CD8-positive, alpha-beta T cell (primary cell): ENCODE measurements at regions of chr12 and their contacts with region 1.

Region 1: GRCh38 chr12:120649442-120650232 is 9.2 kb downstream of the CABP1 start:
- DNase-seq: no peak
- ATAC-seq: no peak
- H3K4me3 ChIP-seq: no peak overlapping the region
- H3K4me3 Mint-ChIP-seq: no peak overlapping the region
- H3K27ac ChIP-seq: no peak overlapping the region
- H3K27ac Mint-ChIP-seq: no peak overlapping the region
- H3K4me1 ChIP-seq: peaks cover 7% of the 10 kb centered on the region
- H3K4me1 Mint-ChIP-seq: peaks cover 9% of the 10 kb centered on the region
- H3K27me3 ChIP-seq: peaks cover 14 to 21% of the 10 kb centered on the region in 2 experiments
- H3K27me3 Mint-ChIP-seq: peaks cover 47% of the 10 kb centered on the region
- CTCF ChIP-seq: peak; percentile 23

Region 2: DNA sequence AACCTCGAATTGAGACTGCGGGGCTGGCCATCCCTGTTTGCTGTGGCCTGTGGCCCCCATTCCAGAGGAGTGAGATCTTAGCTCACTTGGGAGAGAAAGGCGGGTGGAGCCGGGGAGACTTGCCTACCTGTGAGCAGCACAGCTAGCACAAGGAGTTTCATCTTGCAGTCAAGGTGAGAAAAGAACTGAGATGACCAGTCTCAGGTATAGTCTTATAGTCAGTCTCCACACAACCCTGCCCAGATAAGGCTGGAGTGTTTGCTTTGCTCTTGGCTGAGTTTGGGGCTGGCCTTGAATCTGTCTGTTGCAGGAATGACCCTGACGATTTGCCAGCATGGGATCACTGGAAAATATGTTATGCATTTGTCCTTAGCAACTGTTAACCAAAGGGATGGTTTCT is 322.0 kb before region 1 on chr12 and contains the start of gene PLA2G1B:
- CTCF ChIA-PET with region 1: interaction called, 8 read pairs
- POLR2A ChIA-PET with region 1: no interaction called
- intact Hi-C with region 1: loop called (anchors 5 kb)
- DNase-seq: no peak
- ATAC-seq: no peak
- H3K4me3 ChIP-seq: no peak within 1 kb of the TSS
- H3K4me3 Mint-ChIP-seq: no peak within 1 kb of the TSS
- H3K27ac ChIP-seq: no peak within 1 kb of the TSS
- H3K27ac Mint-ChIP-seq: no peak within 1 kb of the TSS
- H3K4me1 ChIP-seq: no peaks in the 10 kb centered on the region
- H3K4me1 Mint-ChIP-seq: peaks cover 7% of the 10 kb centered on the region
- H3K27me3 ChIP-seq: no peaks in the 10 kb centered on the region
- H3K27me3 Mint-ChIP-seq: peaks cover 3% of the 10 kb centered on the region
- CTCF ChIP-seq: no peak
- total RNA-seq, gene PLA2G1B: not detected

Region 3: DNA sequence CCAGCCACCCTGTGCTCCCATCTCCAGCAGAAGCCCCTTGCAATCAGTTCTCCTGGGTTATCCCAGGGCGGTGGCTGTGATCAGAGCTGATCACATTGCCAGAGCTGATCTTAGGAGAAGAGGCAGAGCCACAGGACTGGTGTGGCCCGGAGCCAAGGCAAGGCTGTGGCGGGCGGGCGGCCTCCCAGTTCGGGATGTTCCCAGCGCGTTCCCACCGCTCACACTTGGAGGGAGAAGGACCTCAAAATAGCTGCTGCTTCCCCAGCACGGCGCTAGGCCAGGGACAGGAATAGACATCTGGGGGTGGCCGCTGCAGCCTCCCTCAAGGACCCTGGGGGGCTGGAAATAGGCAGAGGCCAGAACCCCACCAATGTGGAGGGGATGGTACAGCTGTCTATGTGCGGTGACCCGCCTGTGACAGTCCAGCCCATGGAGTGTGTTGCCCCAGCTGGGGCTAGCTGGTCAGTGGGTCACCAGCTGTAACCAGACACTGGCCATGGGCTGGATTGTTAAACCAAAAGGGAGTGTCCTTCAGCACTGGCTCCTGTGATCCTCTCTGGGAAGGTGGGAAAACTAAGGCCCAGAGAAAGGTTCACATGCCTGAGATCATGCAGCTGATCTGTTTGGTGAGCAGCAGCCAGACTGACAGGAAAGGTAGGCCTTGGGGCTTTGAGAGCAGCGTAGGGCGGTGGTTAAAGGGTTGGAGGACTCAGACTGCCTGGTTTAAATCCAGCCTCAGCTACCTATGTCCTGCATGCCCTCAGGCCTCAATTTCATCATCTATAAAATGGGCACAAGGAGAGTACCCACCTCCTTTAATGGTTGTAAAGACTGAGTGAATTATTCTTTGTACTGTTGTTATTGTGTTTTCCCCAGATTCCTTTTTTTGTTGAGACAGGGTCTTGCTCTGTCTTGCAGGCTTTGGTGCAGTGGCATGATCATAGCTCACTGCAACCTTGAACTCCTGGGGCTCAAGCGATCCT is 60.4 kb before region 1 on chr12:
- CTCF ChIA-PET with region 1: interaction called, 101 read pairs
- POLR2A ChIA-PET with region 1: no interaction called
- intact Hi-C with region 1: no loop called
- DNase-seq: no peak
- ATAC-seq: no peak
- H3K4me3 ChIP-seq: no peak overlapping the region
- H3K4me3 Mint-ChIP-seq: no peak overlapping the region
- H3K27ac ChIP-seq: no peak overlapping the region
- H3K27ac Mint-ChIP-seq: no peak overlapping the region
- H3K4me1 ChIP-seq: no peaks in the 10 kb centered on the region
- H3K4me1 Mint-ChIP-seq: peaks cover 5% of the 10 kb centered on the region
- H3K27me3 ChIP-seq: peaks cover 0 to 3% of the 10 kb centered on the region in 2 experiments
- H3K27me3 Mint-ChIP-seq: peaks cover 9% of the 10 kb centered on the region
- CTCF ChIP-seq: no peak

Region 4: GRCh38 chr12:120599672-120600552 is 49.7 kb before region 1 on chr12:
- CTCF ChIA-PET with region 1: no interaction called
- POLR2A ChIA-PET with region 1: no interaction called
- intact Hi-C with region 1: no loop called
- DNase-seq: no peak
- ATAC-seq: no peak
- H3K4me3 ChIP-seq: no peak overlapping the region
- H3K4me3 Mint-ChIP-seq: no peak overlapping the region
- H3K27ac ChIP-seq: no peak overlapping the region
- H3K27ac Mint-ChIP-seq: no peak overlapping the region
- H3K4me1 ChIP-seq: no peaks in the 10 kb centered on the region
- H3K4me1 Mint-ChIP-seq: no peaks in the 10 kb centered on the region
- H3K27me3 ChIP-seq: no peaks in the 10 kb centered on the region
- H3K27me3 Mint-ChIP-seq: peaks cover 10% of the 10 kb centered on the region
- CTCF ChIP-seq: no peak

Region 5: GRCh38 chr12:120677765-120678473 is 28.3 kb after region 1 on chr12:
- CTCF ChIA-PET with region 1: interaction called, 13 read pairs
- POLR2A ChIA-PET with region 1: interaction called, 5 read pairs
- intact Hi-C with region 1: no loop called
- DNase-seq: peak in 1 of 9 experiments; percentile 5
- ATAC-seq: no peak
- H3K4me3 ChIP-seq: no peak overlapping the region
- H3K4me3 Mint-ChIP-seq: no peak overlapping the region
- H3K27ac ChIP-seq: no peak overlapping the region
- H3K27ac Mint-ChIP-seq: no peak overlapping the region
- H3K4me1 ChIP-seq: no peaks in the 10 kb centered on the region
- H3K4me1 Mint-ChIP-seq: peaks cover 5% of the 10 kb centered on the region
- H3K27me3 ChIP-seq: no peaks in the 10 kb centered on the region
- H3K27me3 Mint-ChIP-seq: peaks cover 3% of the 10 kb centered on the region
- CTCF ChIP-seq: no peak

Region 6: DNA sequence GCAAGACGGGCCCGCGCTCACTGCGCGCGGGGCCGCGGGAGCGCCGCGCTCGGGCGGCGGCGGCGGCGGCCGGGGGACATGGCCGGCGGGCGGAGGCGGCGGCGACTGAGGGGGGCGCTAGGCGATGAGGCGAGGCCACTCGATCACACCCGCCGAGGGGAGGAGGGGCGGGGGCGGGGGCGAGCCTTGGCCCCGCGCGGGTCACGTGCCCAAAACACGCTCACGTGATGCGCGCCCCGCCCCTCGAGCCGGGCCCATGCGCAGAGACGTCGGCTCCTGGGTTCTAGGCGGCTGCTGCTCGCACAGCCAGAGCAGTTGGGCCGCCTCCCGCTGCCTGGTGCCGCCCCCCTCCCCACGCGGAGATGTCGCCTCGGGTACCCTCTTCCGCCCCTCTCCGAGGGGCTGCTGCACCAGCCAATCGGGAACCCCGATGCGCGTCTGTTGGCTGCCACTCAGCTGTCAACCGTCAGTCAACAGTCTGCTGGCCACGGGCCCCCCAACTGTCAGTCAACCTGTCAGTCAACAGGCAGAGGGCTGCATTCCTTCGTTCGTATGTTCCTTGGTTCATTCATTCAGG is 254.6 kb after region 1 on chr12 and contains the start of gene SPPL3:
- CTCF ChIA-PET with region 1: no interaction called
- POLR2A ChIA-PET with region 1: no interaction called
- intact Hi-C with region 1: loop called in 1 of 2 experiments (anchors 5 kb)
- DNase-seq: peak; percentile 86 to 96 (median 93)
- ATAC-seq: peak; percentile 75
- H3K4me3 ChIP-seq: peak within 1 kb of the TSS; percentile 76 to 82
- H3K4me3 Mint-ChIP-seq: peak within 1 kb of the TSS; percentile 99
- H3K27ac ChIP-seq: peak within 1 kb of the TSS; percentile 66 to 84
- H3K27ac Mint-ChIP-seq: peak within 1 kb of the TSS; percentile 98
- H3K4me1 ChIP-seq: peaks cover 21% of the 10 kb centered on the region
- H3K4me1 Mint-ChIP-seq: peaks cover 32% of the 10 kb centered on the region
- H3K27me3 ChIP-seq: no peaks in the 10 kb centered on the region
- H3K27me3 Mint-ChIP-seq: no peaks in the 10 kb centered on the region
- CTCF ChIP-seq: no peak
- total RNA-seq, gene SPPL3: 42.3 to 42.9 TPM

Region 7: GRCh38 chr12:121110211-121110940 is 460.7 kb after region 1 on chr12:
- CTCF ChIA-PET with region 1: interaction called, 6 read pairs
- POLR2A ChIA-PET with region 1: no interaction called
- intact Hi-C with region 1: loop called (anchors 1 to 2 kb)
- DNase-seq: peak; percentile 19 to 83 (median 67)
- ATAC-seq: peak; percentile 82
- H3K4me3 ChIP-seq: no peak overlapping the region
- H3K4me3 Mint-ChIP-seq: no peak overlapping the region
- H3K27ac ChIP-seq: no peak overlapping the region
- H3K27ac Mint-ChIP-seq: no peak overlapping the region
- H3K4me1 ChIP-seq: no peaks in the 10 kb centered on the region
- H3K4me1 Mint-ChIP-seq: peaks cover 3% of the 10 kb centered on the region
- H3K27me3 ChIP-seq: no peaks in the 10 kb centered on the region
- H3K27me3 Mint-ChIP-seq: no peaks in the 10 kb centered on the region
- CTCF ChIP-seq: peak; percentile 93